ENCODE measurements at regions of chr1 and their contacts with region 1.

Region 1: GRCh38 chr1:155961937-155962336 is 16.4 kb downstream of the ARHGEF2 start:
- DNase-seq: peak; percentile 100
- H3K4me3 Mint-ChIP-seq: peak overlapping the region; percentile 75
- H3K27ac Mint-ChIP-seq: peak overlapping the region; percentile 98
- H3K4me1 Mint-ChIP-seq: peaks cover 40% of the 10 kb centered on the region
- H3K27me3 Mint-ChIP-seq: no peaks in the 10 kb centered on the region
- CTCF ChIP-seq: peak; percentile 42

Region 2: DNA sequence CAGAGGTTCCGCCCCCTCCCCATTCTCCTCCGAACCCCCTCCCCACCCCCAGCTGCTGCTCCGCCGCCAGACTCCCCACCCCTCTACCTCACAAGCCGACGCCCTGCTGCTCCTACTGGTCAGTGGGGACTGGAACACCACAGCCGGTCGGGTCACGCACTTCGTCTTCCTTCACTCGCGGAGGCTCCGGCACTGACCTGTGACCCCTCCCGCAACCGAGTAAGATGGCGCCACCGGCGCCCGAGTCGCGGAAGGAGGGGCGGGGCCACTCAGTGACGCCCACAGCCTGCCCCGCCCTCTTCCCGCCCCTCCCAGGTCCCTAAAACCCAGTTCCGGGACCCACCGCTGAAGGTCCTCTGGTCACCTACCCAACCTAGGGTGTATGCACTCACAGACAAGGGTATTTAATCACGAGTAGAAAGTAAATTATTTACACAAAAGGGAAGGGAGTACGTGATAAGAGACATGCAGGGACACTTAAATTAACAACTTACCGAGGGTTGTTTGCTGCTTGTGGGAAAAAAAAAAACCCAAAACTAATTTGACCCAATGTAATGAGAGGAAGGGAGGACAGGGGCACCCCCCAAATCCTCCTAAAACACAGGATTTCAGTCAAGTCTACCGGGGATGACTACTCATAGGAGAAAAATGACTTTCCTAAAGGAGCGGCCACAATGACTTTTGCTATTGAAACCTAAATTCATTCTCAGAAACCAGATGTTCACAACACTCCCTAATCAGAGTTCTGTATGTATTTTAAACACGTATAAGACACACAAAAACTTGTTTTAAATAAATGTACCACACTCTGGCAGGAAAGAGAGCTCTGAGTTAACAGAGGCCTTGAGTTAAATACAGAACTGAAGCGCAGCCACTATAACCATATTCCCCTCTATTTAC is 50.5 kb before region 1 on chr1 and contains the start of gene RIT1:
- CTCF ChIA-PET with region 1: no interaction called
- POLR2A ChIA-PET with region 1: no interaction called
- intact Hi-C with region 1: no loop called
- DNase-seq: peak; percentile 88
- H3K4me3 Mint-ChIP-seq: peak within 1 kb of the TSS; percentile 87
- H3K27ac Mint-ChIP-seq: peak within 1 kb of the TSS; percentile 96
- H3K4me1 Mint-ChIP-seq: peaks cover 20% of the 10 kb centered on the region
- H3K27me3 Mint-ChIP-seq: no peaks in the 10 kb centered on the region
- CTCF ChIP-seq: no peak
- total RNA-seq, gene RIT1: 36.2 and 43.1 TPM in 2 replicates

Region 3: DNA sequence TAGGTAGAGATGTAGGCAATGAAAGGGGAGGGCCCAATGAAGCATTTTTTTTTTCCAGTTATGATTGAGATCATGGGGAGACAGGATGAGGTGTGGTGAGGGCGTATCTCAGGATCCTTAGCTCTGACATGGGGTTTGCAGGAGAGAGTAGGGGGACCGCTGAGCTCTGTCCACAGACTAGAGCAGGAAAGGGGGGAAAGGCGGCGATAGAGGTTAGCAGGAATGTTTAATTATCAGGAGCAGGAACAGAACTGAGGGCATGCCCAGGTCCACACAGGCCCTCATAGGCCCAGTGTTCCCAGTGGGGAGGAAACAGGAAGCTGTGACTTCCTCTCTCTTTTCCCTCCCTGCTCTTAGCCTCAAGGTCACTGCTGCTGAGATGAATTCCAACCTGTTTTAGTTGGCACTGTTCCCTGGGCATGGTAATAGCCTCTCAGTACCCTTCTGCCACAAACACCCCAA is 21.4 kb before region 1 on chr1:
- CTCF ChIA-PET with region 1: interaction called, 21 read pairs
- POLR2A ChIA-PET with region 1: interaction called, 67 read pairs
- intact Hi-C with region 1: loop called (anchors 2 kb)
- DNase-seq: peak; percentile 96
- H3K4me3 Mint-ChIP-seq: peak overlapping the region; percentile 11
- H3K27ac Mint-ChIP-seq: peak overlapping the region; percentile 64
- H3K4me1 Mint-ChIP-seq: peaks cover 46% of the 10 kb centered on the region
- H3K27me3 Mint-ChIP-seq: no peaks in the 10 kb centered on the region
- CTCF ChIP-seq: no peak

Region 4: DNA sequence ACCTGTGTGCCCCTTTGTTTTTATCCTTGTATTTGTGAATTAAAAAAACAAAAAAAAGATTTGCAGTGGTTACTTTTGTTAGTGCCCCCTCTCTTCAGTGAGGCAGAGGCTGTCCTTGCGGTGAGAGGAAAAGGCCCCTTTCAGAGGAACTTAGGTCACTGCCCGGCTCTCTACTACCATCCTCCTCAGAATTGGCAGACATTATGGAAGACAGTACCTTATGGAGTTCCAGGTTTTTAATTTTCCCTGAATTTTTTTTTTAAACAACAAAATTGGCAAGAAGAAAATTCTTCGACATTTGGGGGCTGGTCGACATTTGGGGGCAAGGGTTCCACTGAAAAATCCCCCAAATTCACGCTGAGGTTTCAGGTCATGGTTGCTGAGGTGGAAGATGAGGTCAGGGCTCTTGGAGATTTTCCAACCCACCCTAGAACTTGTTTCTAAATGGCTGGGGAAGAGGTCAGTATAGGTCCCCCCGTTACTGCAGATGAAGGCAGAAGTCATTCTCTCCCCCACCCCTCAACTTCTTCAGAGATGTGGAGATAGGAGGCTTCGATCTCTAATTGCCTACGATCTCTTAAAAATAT is 15.2 kb before region 1 on chr1:
- CTCF ChIA-PET with region 1: interaction called, 15 read pairs
- POLR2A ChIA-PET with region 1: interaction called, 33 read pairs
- intact Hi-C with region 1: loop called (anchors 2 kb)
- DNase-seq: no peak
- H3K4me3 Mint-ChIP-seq: no peak overlapping the region
- H3K27ac Mint-ChIP-seq: peak overlapping the region; percentile 14
- H3K4me1 Mint-ChIP-seq: peaks cover 30% of the 10 kb centered on the region
- H3K27me3 Mint-ChIP-seq: no peaks in the 10 kb centered on the region
- CTCF ChIP-seq: no peak

Region 5: DNA sequence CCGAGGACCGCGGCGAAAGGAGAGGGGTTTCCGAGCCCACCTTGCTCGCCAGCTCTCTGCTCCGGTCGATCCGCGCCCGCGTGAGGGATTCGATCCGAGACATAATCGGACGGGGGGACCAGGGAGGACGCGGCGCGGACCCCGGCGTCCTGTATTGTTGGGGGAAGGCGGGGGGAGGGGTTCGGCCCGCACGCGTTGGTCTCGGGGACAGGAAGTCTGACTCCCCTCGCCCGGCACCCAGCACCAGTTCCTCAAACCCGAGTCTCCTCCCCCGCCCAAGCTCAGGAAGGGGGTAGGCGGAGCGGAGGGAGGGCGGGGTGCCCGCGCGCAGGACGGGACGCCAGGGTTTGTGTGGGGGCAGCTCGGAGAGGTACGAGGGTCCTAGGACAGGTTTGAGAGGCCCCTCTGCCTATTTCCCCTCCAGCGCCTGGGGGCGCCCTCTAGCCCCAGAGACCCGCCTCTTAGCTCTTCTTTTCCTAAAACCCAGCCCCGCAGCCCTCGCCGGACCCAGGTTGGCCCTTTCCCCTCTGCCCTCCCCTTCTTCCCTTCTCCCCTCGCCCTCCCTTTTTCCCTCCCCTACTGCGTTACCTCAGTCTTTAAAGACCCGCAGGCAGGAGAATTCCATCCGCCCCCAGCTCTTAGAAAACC is 16.5 kb after region 1 on chr1 and contains the start of gene ARHGEF2:
- CTCF ChIA-PET with region 1: interaction called, 73 read pairs
- POLR2A ChIA-PET with region 1: interaction called, 259 read pairs
- intact Hi-C with region 1: loop called (anchors 1 kb)
- DNase-seq: peak; percentile 89
- H3K4me3 Mint-ChIP-seq: peak within 1 kb of the TSS; percentile 81
- H3K27ac Mint-ChIP-seq: peak within 1 kb of the TSS; percentile 90
- H3K4me1 Mint-ChIP-seq: peaks cover 83% of the 10 kb centered on the region
- H3K27me3 Mint-ChIP-seq: no peaks in the 10 kb centered on the region
- CTCF ChIP-seq: no peak
- total RNA-seq, gene ARHGEF2: 498 and 555 TPM in 2 replicates